ENCODE measurements at regions of chr13 and their contacts with region 1.

Region 1: DNA sequence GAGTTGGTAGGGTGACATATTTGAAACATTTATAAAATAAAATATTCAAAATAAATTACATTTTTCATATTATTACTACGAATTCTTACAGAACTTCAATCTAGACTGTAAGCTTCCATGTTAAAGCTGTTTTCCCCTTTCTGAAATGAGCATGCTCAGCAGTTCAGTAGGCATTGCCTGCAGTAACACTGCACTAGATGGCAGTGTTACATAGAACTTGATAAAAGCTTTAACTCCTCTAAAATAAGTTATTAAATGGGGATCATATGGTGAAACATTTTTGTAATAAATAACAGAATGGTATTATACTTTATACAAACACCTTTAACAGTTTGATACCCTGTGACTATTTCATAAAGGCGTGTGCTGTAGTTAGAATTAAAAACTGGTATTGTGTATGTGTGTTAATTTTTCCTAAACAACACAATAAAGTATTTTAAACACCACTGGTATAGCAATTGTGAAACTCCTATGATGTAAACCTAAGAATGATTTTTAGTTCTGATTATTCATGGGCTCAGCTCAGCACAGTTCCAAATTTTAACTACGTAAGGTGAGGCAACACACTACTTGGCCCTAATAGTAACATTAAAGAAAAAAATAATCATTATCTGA is 11.6 kb upstream of the GPR18 start:
- DNase-seq: peak; percentile 46
- ATAC-seq: peak; percentile 62
- H3K4me3 Mint-ChIP-seq: no peak overlapping the region
- H3K27ac Mint-ChIP-seq: no peak overlapping the region
- H3K4me1 Mint-ChIP-seq: peaks cover 64% of the 10 kb centered on the region
- H3K27me3 Mint-ChIP-seq: no peaks in the 10 kb centered on the region

Region 2: GRCh38 chr13:98826146-98826545 is 443.6 kb before region 1 on chr13:
- CTCF ChIA-PET with region 1: no interaction called
- POLR2A ChIA-PET with region 1: no interaction called
- DNase-seq: no peak
- ATAC-seq: no peak
- H3K4me3 Mint-ChIP-seq: no peak overlapping the region
- H3K27ac Mint-ChIP-seq: no peak overlapping the region
- H3K4me1 Mint-ChIP-seq: peaks cover 28% of the 10 kb centered on the region
- H3K27me3 Mint-ChIP-seq: no peaks in the 10 kb centered on the region

Region 3: DNA sequence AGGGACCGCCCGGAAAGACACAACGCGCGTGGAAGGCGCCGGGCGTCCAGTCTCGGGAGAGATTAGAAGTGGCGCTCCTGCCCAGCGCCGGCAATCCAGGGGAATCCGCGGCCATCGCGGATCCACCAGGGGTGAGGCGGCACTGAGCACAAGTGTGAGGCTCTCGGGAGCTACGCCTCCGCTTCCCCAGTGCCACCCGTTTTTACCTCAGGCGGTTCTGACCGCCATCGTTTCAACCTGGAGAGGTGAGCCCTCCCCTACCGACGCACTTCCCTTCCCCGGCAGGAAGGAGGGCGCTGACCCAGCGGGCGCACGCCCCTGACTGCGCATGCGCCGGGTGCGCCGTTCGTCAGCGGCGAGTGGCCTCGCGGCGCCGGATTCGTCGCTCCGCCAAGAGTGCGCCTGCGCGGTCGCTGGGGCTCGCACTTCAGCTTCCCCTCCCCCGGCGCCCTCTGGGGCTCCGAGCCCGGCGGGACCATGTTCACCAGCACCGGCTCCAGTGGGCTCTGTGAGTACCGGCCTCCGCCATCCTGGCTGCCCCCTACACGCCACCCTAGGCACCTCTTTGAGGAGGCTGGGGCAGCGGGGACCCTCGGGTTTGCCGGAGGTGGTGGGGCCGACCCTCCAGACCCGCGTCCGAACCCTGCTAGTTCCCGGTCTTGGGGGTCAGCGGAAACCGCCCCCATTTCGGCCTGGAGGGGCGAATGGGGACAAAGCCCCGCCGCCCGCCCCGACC is 69.1 kb before region 1 on chr13 and contains the start of gene UBAC2:
- CTCF ChIA-PET with region 1: interaction called, 219 read pairs
- POLR2A ChIA-PET with region 1: interaction called, 40 read pairs
- DNase-seq: peak; percentile 96
- ATAC-seq: peak; percentile 81
- H3K4me3 Mint-ChIP-seq: peak within 1 kb of the TSS; percentile 97
- H3K27ac Mint-ChIP-seq: peak within 1 kb of the TSS; percentile 97
- H3K4me1 Mint-ChIP-seq: peaks cover 64% of the 10 kb centered on the region
- H3K27me3 Mint-ChIP-seq: no peaks in the 10 kb centered on the region
- total RNA-seq, gene UBAC2: 67.4 to 71.2 TPM

Region 4: DNA sequence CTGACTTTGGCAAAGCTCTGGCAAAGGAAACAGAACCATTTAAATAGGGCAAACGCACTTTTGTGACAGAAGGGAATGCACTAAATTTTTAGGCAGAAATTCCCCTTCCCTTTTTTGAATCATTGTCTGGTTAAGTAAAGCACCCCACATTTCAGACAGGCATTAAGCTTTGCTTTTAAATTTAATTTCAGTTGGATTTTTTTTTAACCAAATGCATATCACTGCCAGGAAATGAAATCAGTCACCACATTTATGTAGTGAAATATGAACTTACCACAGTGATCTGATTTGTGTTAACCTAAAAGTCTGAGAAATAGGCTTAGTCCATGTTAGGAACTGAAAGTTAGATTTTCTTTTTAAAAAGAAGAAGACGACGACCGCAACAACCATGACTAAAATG is 26.7 kb after region 1 on chr13:
- CTCF ChIA-PET with region 1: interaction called, 17 read pairs
- POLR2A ChIA-PET with region 1: no interaction called
- DNase-seq: no peak
- ATAC-seq: peak; percentile 73
- H3K4me3 Mint-ChIP-seq: peak overlapping the region; percentile 77
- H3K27ac Mint-ChIP-seq: peak overlapping the region; percentile 97
- H3K4me1 Mint-ChIP-seq: peaks cover 65% of the 10 kb centered on the region
- H3K27me3 Mint-ChIP-seq: no peaks in the 10 kb centered on the region

Region 5: DNA sequence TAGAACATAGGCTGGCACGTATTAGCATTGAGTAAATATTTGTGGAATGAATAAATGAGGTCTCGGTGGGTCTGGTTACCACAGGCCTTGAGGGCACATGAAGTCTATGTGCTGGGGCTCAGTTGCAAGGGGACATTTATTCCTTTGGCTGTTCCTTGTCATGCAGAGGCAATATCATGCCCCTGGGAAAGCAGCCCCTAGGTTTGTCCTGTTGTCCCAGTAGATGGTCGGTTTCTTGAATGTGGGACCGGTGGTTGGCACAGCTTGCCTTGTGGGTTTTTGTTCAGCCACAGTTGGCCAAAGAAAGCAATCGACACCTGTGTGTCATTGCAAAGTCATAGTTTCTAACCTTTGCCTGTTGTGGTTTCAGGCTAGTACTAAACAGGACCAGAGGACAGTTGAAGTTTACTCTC is 62.2 kb after region 1 on chr13:
- CTCF ChIA-PET with region 1: interaction called, 13 read pairs
- POLR2A ChIA-PET with region 1: no interaction called
- DNase-seq: no peak
- ATAC-seq: peak; percentile 39
- H3K4me3 Mint-ChIP-seq: no peak overlapping the region
- H3K27ac Mint-ChIP-seq: peak overlapping the region; percentile 36
- H3K4me1 Mint-ChIP-seq: peaks cover 32% of the 10 kb centered on the region
- H3K27me3 Mint-ChIP-seq: no peaks in the 10 kb centered on the region

Region 6: DNA sequence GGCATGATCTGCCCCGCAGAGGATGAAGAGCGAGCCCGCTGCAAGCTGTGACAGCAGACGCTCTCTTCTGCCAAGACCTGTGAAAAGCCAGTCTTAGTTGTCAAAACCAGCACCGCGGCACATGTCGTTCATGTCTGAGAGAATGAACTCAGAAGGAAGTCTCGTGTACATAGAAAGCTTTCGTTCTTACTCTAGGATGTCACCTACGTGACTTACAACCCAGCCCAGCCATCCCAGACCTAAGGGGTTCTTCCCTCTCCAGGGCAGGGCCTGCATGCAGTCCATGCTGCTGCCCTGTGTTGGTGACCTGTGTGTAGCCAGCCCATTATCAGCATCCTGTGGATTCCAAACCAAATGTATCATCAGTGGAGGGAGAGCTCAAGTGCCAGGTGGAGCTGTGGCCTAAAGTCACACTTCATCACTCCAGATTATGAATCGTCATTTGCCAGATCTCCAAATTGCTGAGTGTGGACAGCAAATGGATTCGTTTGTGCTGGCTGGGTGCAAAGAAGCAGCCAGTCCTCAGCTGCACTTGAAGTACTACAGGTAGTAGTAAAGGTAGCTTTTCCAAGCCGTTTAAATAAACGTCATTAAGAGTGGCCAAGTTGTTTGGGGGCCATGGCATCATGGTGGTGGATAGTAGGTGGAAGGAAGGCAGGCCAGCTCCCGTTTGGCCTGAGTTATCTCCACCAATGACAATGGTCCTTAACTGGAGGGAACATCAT is 111.3 kb after region 1 on chr13:
- CTCF ChIA-PET with region 1: interaction called, 139 read pairs
- POLR2A ChIA-PET with region 1: interaction called, 8 read pairs
- DNase-seq: peak; percentile 78
- ATAC-seq: peak; percentile 50
- H3K4me3 Mint-ChIP-seq: peak overlapping the region; percentile 43
- H3K27ac Mint-ChIP-seq: peak overlapping the region; percentile 93
- H3K4me1 Mint-ChIP-seq: peaks cover 92% of the 10 kb centered on the region
- H3K27me3 Mint-ChIP-seq: no peaks in the 10 kb centered on the region

Region 7: DNA sequence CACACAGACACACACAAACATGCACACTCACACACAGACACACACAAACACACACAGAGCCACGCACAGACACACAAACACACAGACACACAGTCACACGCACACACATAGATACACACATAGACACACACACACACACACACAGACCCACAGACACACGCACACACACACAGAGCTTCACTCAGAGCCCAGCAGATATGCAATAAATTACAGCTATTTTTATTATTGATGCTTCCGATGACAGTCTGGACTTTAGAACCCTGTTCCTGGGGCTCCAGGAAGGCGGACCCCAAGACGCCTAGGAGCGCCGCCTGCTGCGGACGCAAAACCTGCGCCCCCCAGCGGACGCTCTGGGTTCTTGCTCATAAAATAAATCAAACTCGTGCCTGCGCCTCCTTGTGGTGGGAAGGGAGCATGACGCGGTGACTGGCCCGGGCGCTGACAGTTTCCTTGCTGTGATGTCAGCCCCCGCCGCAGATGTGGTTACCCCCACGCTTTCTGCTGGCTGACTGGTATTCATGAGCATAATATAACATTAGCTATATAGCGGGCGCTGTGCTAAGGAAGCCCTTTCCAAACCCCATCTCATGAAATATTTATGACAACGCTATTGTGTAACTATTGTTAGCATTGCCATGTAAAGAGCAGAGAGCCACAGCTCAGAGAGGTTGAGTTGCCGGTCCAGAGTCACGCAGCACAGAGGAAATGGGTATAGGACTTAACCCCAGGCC is 167.1 kb after region 1 on chr13:
- CTCF ChIA-PET with region 1: interaction called, 346 read pairs
- POLR2A ChIA-PET with region 1: interaction called, 8 read pairs
- DNase-seq: peak; percentile 98
- ATAC-seq: peak; percentile 70
- H3K4me3 Mint-ChIP-seq: peak overlapping the region; percentile 25
- H3K27ac Mint-ChIP-seq: peak overlapping the region; percentile 58
- H3K4me1 Mint-ChIP-seq: peaks cover 61% of the 10 kb centered on the region
- H3K27me3 Mint-ChIP-seq: peaks cover 22% of the 10 kb centered on the region